AG04450 (cell line): ENCODE measurements at regions of chr10 and their contacts with region 1.

Region 1: DNA sequence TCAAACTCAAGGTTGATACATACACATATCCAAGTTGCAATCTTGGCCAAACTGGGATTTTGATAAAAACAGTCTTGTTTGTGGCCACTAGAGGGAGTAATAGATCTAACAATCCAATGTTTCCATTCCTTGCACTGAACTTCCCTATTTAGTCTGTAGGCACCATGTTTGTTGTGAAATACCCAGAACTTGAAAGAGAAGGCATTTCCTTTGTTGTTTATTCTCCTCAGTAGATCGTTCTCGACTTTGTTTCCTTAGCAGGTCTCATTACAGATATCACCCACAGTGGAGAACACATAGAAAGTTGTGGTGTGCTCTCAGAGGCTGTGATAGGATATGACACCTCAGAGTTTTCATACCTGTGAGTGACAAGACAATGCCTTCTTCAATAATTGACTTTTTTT is 70.3 kb upstream of the MXI1 start:
- DNase-seq: peak; percentile 48
- H3K4me3 ChIP-seq: no peak overlapping the region
- H3K27ac ChIP-seq: no peak overlapping the region
- H3K27me3 ChIP-seq: no peaks in the 10 kb centered on the region
- CTCF ChIP-seq: peak; percentile 76

Region 2: DNA sequence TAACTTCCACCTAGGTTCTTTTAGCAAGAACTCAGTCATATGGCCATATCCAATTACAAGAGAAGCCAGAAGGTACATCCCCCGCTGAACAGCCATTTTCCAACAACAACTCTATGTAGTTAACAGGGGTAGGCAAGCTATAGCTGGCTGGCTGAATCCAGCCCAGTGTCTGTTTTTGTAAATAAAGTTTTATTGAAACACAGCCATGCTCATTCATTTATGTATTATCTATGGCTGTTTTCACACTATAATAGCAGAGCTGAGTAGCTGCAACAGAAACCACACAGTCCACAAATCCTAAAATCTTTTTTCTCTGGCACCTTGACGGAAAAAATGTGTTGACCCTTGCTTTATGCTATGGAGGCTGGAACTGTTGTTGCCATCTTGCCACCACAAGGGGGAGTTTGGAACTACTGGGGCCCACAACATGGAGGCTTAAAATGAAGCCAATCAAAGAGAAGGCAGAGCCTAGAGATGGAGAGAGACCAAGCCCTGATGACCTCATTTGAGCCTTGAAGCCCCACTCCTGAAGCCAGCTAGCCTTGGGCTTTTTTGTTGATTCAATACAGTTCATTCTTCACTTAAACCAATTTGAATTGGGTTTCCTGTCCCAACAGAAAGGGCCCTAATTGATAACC is 180.6 kb before region 1 on chr10:
- CTCF ChIA-PET with region 1: no interaction called
- POLR2A ChIA-PET with region 1: interaction called, 14 read pairs
- DNase-seq: no peak
- H3K4me3 ChIP-seq: no peak overlapping the region
- H3K27ac ChIP-seq: no peak overlapping the region
- H3K27me3 ChIP-seq: no peaks in the 10 kb centered on the region
- CTCF ChIP-seq: peak; percentile 61

Region 3: GRCh38 chr10:110147961-110148360 is 10.8 kb after region 1 on chr10:
- CTCF ChIA-PET with region 1: interaction called, 12 read pairs
- POLR2A ChIA-PET with region 1: no interaction called
- DNase-seq: no peak
- H3K4me3 ChIP-seq: no peak overlapping the region
- H3K27ac ChIP-seq: no peak overlapping the region
- H3K27me3 ChIP-seq: peaks cover 8% of the 10 kb centered on the region
- CTCF ChIP-seq: no peak

Region 4: DNA sequence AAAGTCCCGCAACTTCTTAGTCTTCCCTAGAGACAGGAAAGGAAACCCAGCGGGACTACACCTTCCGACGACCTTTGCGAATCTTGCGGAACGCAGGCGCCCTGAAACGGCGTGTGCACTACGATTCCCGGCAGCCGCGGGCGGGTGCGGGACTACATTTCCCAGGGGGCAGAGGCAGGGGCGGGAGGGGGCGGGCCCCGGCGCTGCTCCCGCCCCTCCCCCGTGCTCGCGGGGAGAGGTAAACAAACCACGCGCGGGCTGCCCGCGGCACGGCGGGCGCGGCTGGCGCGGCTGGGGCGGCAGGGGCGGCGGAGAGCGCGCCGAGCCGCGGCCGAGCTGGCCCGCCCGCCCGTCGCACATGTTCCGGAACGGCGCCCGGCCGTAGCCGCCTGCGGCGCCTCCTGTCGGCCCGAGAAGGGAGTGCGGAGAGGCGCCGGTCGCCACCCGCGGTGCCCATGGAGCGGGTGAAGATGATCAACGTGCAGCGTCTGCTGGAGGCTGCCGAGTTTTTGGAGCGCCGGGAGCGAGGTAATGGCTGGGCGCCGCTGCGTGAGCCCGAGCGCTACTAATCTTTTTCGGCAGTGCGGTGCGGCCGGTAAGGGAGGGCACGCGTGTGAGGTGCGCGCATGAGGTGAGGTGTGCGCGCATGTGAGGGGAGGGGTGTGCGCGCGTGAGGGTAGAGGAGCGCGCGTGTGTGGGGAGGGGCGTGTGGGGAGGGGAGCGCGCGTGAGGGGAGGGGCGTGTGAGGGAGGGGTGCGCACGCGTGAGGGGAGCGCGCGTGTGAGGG is 88.8 kb after region 1 on chr10:
- CTCF ChIA-PET with region 1: interaction called, 16 read pairs
- POLR2A ChIA-PET with region 1: no interaction called
- DNase-seq: peak; percentile 88
- H3K4me3 ChIP-seq: peak overlapping the region; percentile 78
- H3K27ac ChIP-seq: peak overlapping the region; percentile 77
- H3K27me3 ChIP-seq: no peaks in the 10 kb centered on the region
- CTCF ChIP-seq: peak; percentile 57

Region 5: GRCh38 chr10:110273474-110273873 is 136.3 kb after region 1 on chr10:
- CTCF ChIA-PET with region 1: interaction called, 265 read pairs
- POLR2A ChIA-PET with region 1: no interaction called
- DNase-seq: peak; percentile 57
- H3K4me3 ChIP-seq: no peak overlapping the region
- H3K27ac ChIP-seq: no peak overlapping the region
- H3K27me3 ChIP-seq: no peaks in the 10 kb centered on the region
- CTCF ChIP-seq: no peak

Region 6: GRCh38 chr10:110285501-110285900 is 148.4 kb after region 1 on chr10:
- CTCF ChIA-PET with region 1: interaction called, 265 read pairs
- POLR2A ChIA-PET with region 1: no interaction called
- DNase-seq: no peak
- H3K4me3 ChIP-seq: no peak overlapping the region
- H3K27ac ChIP-seq: no peak overlapping the region
- H3K27me3 ChIP-seq: no peaks in the 10 kb centered on the region
- CTCF ChIP-seq: no peak

Region 7: DNA sequence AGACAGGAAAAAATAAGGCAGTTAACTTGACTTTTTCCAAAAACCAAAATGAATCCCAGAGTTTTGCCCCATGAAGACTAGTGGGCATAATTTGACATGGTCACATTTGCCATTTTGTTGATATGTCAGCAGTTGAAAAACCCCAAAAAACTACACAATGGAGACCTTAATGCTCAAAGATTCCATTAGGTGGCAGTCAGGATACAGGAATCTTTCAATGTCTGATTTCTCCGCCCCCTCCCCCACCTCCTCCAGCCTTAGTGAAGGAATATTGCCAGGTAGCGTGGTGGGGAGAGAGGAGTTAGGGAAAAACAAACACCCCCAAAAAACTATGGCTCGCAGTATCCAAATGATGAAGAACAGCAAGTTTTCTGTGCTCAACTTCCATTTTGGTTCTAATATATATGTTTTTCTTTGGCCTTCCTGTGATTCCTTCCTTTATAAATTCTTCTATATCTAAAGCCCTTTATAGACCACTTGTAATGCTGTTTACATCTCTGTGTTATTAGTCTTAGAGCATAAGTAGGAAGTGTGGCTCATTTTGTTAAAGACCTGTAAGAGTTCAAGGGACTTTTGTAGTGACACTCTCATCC is 174.3 kb after region 1 on chr10:
- CTCF ChIA-PET with region 1: no interaction called
- POLR2A ChIA-PET with region 1: no interaction called
- DNase-seq: peak; percentile 26
- H3K4me3 ChIP-seq: no peak overlapping the region
- H3K27ac ChIP-seq: no peak overlapping the region
- H3K27me3 ChIP-seq: no peaks in the 10 kb centered on the region
- CTCF ChIP-seq: peak; percentile 73